Heart right ventricle (tissue), 16 donors: ENCODE measurements at regions of chr16 and their contacts with region 1.

Region 1: DNA sequence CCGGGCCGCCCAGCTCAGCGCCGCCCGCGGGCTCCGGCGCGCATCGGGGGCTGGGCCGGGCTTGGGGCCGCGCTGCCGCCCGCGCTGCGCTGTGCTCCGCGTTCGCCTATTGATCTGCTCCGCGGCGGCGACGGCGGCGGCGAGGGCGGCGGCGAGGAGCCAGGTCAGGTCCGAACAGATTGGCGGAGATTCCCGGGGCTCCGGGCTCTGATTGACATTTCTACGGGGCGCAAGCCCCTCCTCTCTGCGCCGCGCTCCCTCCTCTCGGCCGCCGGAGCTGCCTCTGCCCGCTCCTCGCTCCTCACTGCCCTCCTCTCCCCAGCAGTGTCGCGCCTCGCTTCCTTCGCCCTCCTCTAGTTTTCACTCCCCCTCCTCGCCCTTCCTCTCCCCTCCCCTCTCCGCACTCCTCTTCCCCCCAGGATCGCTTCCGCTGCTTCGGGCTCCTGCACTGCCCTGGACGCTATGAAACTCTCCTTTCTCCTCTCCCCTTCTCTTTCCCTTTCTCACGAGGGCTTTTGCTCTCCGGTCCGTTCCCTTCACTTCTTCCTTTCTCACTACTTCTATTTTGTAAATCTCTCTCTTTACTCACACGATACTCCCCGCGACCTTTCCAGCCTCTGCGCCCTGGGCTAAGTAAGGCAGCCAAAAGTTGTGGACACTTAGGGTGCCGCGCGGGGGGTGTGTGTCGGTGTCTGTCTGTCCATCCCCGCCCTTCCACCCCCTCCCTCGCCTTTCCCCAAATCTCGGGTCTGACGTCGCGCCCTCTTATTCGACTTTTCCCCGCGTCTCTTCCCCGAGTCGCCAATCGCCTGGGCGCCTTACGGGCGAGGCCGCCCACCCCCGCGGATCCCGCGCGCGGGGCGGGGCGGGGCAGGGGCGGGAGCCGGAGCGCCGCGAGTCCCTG is at the start of gene IRX3:
- DNase-seq: peak; percentile 89 to 92
- ATAC-seq: peak; percentile 76 to 84 (median 80)
- H3K4me3 ChIP-seq: peak within 1 kb of the TSS; percentile 61 to 93 (median 73)
- H3K27ac ChIP-seq: peak within 1 kb of the TSS; percentile 84 to 98 (median 94)
- H3K4me1 ChIP-seq: peaks cover 0 to 54% (median 23%) of the 10 kb centered on the region in 9 donors
- H3K27me3 ChIP-seq: peaks cover 0 to 100% (median 48%) of the 10 kb centered on the region in 7 donors
- CTCF ChIP-seq: no peak
- total RNA-seq, gene IRX3: 24.7 to 85.7 (median 69.7) TPM

Region 2: GRCh38 chr16:53773150-53773846 is 513.0 kb before region 1 on chr16:
- intact Hi-C with region 1: loop called in 3 of 10 experiments (anchors 2 to 10 kb)
- DNase-seq: peak in 1 of 2 donors; percentile 50
- ATAC-seq: peak; percentile 76 to 94 (median 90)
- H3K4me3 ChIP-seq: no peak overlapping the region
- H3K27ac ChIP-seq: peak overlapping the region in 9 of 10 donors; percentile 9 to 68 (median 51)
- H3K4me1 ChIP-seq: peaks cover 2 to 94% (median 52%) of the 10 kb centered on the region in 9 donors
- H3K27me3 ChIP-seq: no peaks in the 10 kb centered on the region
- CTCF ChIP-seq: peak; percentile 23 to 75 (median 58)

Region 3: DNA sequence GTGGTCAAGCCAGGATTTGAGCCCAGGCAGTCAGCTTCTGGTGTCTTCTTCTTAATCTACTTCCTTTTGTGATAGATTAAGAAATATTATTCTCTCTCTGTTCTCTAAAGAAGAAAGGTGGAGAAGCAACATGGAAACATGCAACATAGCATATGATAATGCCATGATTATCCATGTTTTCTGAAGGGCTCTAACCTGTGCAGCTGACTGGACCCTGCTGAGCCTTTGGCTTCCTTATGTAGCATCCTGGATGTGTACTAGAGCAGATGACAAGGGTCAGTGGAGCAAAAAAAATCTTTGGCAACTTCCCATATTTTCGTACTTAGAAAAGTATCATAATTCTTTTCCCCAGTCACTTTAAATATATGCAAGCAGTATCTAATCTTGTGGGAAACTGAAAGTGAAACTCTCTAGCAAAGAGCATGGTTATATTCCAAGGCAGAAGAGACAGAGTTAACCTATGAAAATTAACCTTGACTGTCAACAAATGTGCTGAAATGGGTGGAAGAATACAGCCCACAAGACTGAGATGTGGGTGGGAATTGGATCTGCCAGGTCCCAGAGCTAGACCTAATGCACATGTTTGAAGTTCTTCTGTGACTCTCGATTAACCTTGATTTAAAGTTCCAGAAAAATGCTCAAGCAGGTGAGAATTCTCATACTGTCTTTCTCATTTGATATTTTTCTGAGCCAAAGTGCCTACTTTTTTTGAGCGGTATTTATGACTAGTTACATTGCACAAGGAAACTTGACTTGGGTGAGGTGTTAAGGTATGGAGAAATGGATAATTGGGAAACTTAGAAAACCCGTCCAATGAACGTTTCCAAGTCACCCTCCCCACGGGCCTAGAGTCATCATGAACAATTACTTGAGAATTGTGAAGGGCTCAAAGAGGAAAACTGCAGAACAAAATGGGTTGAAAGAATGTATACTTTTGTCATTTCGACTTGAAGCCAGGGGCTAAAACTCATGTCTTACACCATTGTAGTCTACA is 333.8 kb before region 1 on chr16:
- intact Hi-C with region 1: loop called in 2 of 10 experiments (anchors 10 kb)
- DNase-seq: no peak
- ATAC-seq: peak in 5 of 8 donors; percentile 25 to 68 (median 53)
- H3K4me3 ChIP-seq: peak overlapping the region in 2 of 10 donors; percentile 5 to 11
- H3K27ac ChIP-seq: peak overlapping the region in 1 of 10 donors; percentile 31
- H3K4me1 ChIP-seq: peaks cover 0 to 27% (median 12%) of the 10 kb centered on the region in 9 donors
- H3K27me3 ChIP-seq: no peaks in the 10 kb centered on the region
- CTCF ChIP-seq: no peak

Region 4: DNA sequence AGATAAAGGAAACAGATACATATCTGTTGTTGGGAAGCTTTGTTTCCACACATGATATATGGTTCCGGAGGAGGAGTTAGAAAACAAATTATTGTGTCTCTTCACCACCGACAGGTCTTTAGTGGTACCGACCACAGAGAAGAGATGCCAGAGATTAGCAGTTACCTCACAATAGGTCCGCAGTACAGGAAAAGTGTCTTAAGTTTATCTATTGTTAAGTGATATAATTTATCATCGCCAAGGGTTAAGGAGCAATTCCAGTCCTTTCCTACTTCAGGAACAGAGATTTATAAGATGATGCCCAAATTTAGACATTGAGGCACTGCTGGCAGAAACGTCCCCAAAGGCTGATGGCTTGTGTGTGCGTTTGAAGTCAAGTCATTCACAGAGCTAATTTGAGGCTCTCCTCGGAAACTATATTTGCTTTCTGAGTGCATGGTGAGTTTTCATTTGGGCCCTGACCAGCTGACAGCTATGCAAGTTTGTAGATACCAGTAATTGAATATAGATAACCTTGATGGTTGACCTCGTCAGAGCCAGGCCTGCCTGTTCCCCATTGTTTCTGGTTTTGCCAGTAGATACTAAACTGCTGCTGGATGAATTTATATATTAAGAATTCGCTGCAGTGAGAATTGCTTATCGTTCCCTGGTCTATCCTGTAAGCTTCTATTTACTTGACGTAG is 196.7 kb after region 1 on chr16:
- intact Hi-C with region 1: loop called in 4 of 10 experiments (anchors 2 to 10 kb)
- DNase-seq: peak in 1 of 2 donors; percentile 54
- ATAC-seq: peak; percentile 71 to 93 (median 88)
- H3K4me3 ChIP-seq: no peak overlapping the region
- H3K27ac ChIP-seq: peak overlapping the region; percentile 38 to 93 (median 84)
- H3K4me1 ChIP-seq: peaks cover 0 to 42% (median 17%) of the 10 kb centered on the region in 9 donors
- H3K27me3 ChIP-seq: no peaks in the 10 kb centered on the region
- CTCF ChIP-seq: no peak

Region 5: DNA sequence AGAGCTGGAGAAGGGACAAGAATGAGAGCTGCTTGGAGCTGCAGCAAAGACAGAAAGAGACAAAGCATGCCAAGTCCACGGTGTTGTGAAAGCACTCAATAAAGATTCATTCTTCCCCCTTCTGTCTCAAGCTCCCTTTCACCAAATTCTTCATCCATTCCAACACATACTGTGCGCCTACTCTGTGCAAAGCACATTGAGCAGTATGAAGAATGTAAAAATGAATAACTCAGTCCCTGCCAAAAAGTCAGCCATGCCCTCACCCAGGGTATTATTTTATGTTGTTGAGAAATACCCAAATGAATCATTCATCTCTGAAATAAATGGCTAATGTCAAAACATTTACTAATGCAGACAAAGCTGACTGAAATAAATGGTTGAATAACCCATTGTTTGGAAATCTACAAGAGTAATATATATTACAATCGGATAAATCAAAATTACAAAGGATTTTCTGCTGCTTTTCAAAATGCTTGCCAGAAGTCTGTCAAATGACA is 361.4 kb after region 1 on chr16:
- intact Hi-C with region 1: loop called in 3 of 10 experiments (anchors 10 kb)
- DNase-seq: no peak
- ATAC-seq: no peak
- H3K4me3 ChIP-seq: no peak overlapping the region
- H3K27ac ChIP-seq: no peak overlapping the region
- H3K4me1 ChIP-seq: peaks cover 0 to 3% (median 0%) of the 10 kb centered on the region in 9 donors
- H3K27me3 ChIP-seq: peaks cover 0 to 1% (median 0%) of the 10 kb centered on the region in 7 donors
- CTCF ChIP-seq: no peak

Region 6: GRCh38 chr16:54817446-54817845 is 531.1 kb after region 1 on chr16:
- intact Hi-C with region 1: loop called in 8 of 10 experiments (anchors 2 to 10 kb)
- DNase-seq: peak in 1 of 2 donors; percentile 7
- ATAC-seq: peak; percentile 41 to 72 (median 54)
- H3K4me3 ChIP-seq: no peak overlapping the region
- H3K27ac ChIP-seq: no peak overlapping the region
- H3K4me1 ChIP-seq: no peaks in the 10 kb centered on the region
- H3K27me3 ChIP-seq: no peaks in the 10 kb centered on the region
- CTCF ChIP-seq: peak in 7 of 9 donors; percentile 22 to 57 (median 44)

Region 7: GRCh38 chr16:55370762-55371482 is 1084.6 kb after region 1 on chr16:
- intact Hi-C with region 1: loop called in 2 of 10 experiments (anchors 5 to 10 kb)
- DNase-seq: peak; percentile 73 to 74
- ATAC-seq: peak; percentile 76 to 90 (median 82)
- H3K4me3 ChIP-seq: peak overlapping the region in 2 of 10 donors; percentile 17 to 23
- H3K27ac ChIP-seq: peak overlapping the region in 8 of 10 donors; percentile 16 to 89 (median 84)
- H3K4me1 ChIP-seq: peaks cover 0 to 70% (median 27%) of the 10 kb centered on the region in 9 donors
- H3K27me3 ChIP-seq: peaks cover 0 to 57% (median 0%) of the 10 kb centered on the region in 7 donors
- CTCF ChIP-seq: peak in 8 of 9 donors; percentile 47 to 78 (median 56)

Region 8: GRCh38 chr16:55539049-55539448 is 1252.7 kb after region 1 on chr16:
- intact Hi-C with region 1: no loop called
- DNase-seq: no peak
- ATAC-seq: peak in 6 of 8 donors; percentile 16 to 56 (median 48)
- H3K4me3 ChIP-seq: no peak overlapping the region
- H3K27ac ChIP-seq: peak overlapping the region in 7 of 10 donors; percentile 17 to 63 (median 44)
- H3K4me1 ChIP-seq: peaks cover 0 to 59% (median 0%) of the 10 kb centered on the region in 9 donors
- H3K27me3 ChIP-seq: no peaks in the 10 kb centered on the region
- CTCF ChIP-seq: no peak